AG04450 (cell line): ENCODE measurements at regions of chr22 and their contacts with region 1.

Region 1: GRCh38 chr22:41381329-41382097 is at the start of gene TEF:
- DNase-seq: peak; percentile 98
- H3K4me3 ChIP-seq: peak within 1 kb of the TSS; percentile 74
- H3K27ac ChIP-seq: peak within 1 kb of the TSS; percentile 99
- H3K27me3 ChIP-seq: no peaks in the 10 kb centered on the region
- CTCF ChIP-seq: no peak
- polyA plus RNA-seq, gene TEF: 13.7 and 18.3 TPM in 2 replicates

Region 2: GRCh38 chr22:41301105-41302020 is 80.2 kb before region 1 on chr22 and contains the start of gene ZC3H7B:
- CTCF ChIA-PET with region 1: no interaction called
- POLR2A ChIA-PET with region 1: interaction called, 10 read pairs
- DNase-seq: peak; percentile 27
- H3K4me3 ChIP-seq: peak within 1 kb of the TSS; percentile 73
- H3K27ac ChIP-seq: peak within 1 kb of the TSS; percentile 73
- H3K27me3 ChIP-seq: no peaks in the 10 kb centered on the region
- CTCF ChIP-seq: peak; percentile 66
- polyA plus RNA-seq, gene ZC3H7B: 55.3 and 68.7 TPM in 2 replicates

Region 3: GRCh38 chr22:41367039-41367679 is 14.4 kb before region 1 on chr22:
- CTCF ChIA-PET with region 1: interaction called, 5 read pairs
- POLR2A ChIA-PET with region 1: interaction called, 63 read pairs
- DNase-seq: peak; percentile 93
- H3K4me3 ChIP-seq: peak overlapping the region; percentile 55
- H3K27ac ChIP-seq: no peak overlapping the region
- H3K27me3 ChIP-seq: no peaks in the 10 kb centered on the region
- CTCF ChIP-seq: peak; percentile 60

Region 4: GRCh38 chr22:41468381-41469217 is 87.1 kb after region 1 on chr22 and contains the starts of genes ACO2 and PHF5A:
- CTCF ChIA-PET with region 1: no interaction called
- POLR2A ChIA-PET with region 1: interaction called, 10 read pairs
- DNase-seq: peak; percentile 93
- H3K4me3 ChIP-seq: peak within 1 kb of the TSS; percentile 98
- H3K27ac ChIP-seq: peak within 1 kb of the TSS; percentile 86
- H3K27me3 ChIP-seq: no peaks in the 10 kb centered on the region
- CTCF ChIP-seq: no peak
- polyA plus RNA-seq, gene ACO2: 32.2 and 44.4 TPM in 2 replicates
- polyA plus RNA-seq, gene PHF5A: 47.9 and 53.8 TPM in 2 replicates